ENCODE measurements at regions of chr12 and their contacts with region 1.

Region 1: DNA sequence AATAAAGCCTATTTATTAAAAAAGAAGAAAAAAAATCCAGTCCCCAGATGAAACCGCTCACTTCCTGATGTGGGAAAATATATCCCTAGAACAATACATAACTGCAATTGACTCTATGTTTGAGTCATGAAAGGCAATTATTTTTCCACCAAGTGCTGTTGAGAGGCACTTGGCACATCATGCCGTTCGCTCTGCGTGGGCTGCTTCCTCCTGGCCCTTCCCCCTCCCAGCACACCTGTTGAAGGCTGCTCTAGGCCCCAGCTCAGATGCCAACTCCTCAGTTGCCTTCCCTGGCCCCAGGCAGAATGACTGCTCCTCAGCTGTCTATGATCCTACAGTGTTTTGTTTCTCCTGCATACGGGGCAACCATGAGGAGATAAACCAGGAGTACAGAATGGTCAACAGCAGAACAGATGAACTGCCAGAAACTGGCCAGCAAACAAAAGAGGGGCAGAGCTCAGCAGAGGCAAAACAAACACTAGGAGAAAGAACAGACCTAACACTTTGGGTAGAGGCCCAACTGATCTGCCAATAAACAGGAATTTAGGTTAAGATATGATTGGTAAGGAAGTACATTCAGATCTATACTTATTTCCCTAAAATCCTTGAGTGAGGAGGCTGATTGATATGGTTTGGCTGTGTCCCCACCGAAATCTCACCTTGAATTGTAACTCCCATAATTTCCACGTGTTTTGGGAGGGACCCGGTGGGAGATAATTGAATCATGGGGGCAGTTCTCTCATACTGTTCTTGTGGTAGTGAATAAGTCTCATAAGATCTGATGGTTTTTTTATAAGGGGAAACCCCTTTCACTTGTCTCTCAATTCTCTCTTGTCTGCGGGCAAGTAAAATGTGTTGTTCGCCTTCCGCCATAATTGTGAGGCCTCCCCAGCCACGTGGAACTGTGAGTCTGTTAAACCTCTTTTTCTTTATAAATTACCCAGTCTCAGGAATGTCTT is 58.6 kb downstream of the SLC38A1 start:
- DNase-seq: peak; percentile 25 to 37
- ATAC-seq: peak; percentile 51 to 95 (median 78)
- H3K4me3 ChIP-seq: no peak overlapping the region
- H3K27ac ChIP-seq: peak overlapping the region; percentile 42 to 73 (median 58)
- H3K4me1 ChIP-seq: peaks cover 0 to 76% (median 39%) of the 10 kb centered on the region in 9 donors
- H3K27me3 ChIP-seq: no peaks in the 10 kb centered on the region
- CTCF ChIP-seq: no peak

Region 2: GRCh38 chr12:46174061-46174662 is 36.0 kb before region 1 on chr12:
- intact Hi-C with region 1: no loop called
- DNase-seq: no peak
- ATAC-seq: no peak
- H3K4me3 ChIP-seq: no peak overlapping the region
- H3K27ac ChIP-seq: no peak overlapping the region
- H3K4me1 ChIP-seq: peaks cover 0 to 6% (median 0%) of the 10 kb centered on the region in 9 donors
- H3K27me3 ChIP-seq: no peaks in the 10 kb centered on the region
- CTCF ChIP-seq: no peak

Region 3: GRCh38 chr12:46198913-46199312 is 11.3 kb before region 1 on chr12:
- intact Hi-C with region 1: no loop called
- DNase-seq: no peak
- ATAC-seq: no peak
- H3K4me3 ChIP-seq: no peak overlapping the region
- H3K27ac ChIP-seq: no peak overlapping the region
- H3K4me1 ChIP-seq: peaks cover 0 to 3% (median 0%) of the 10 kb centered on the region in 9 donors
- H3K27me3 ChIP-seq: no peaks in the 10 kb centered on the region
- CTCF ChIP-seq: no peak

Region 4: GRCh38 chr12:46259713-46260112 is 49.5 kb after region 1 on chr12:
- intact Hi-C with region 1: loop called in 2 of 10 experiments (anchors 5 to 10 kb)
- DNase-seq: no peak
- ATAC-seq: no peak
- H3K4me3 ChIP-seq: no peak overlapping the region
- H3K27ac ChIP-seq: peak overlapping the region in 5 of 10 donors; percentile 51 to 72 (median 69)
- H3K4me1 ChIP-seq: peaks cover 0 to 60% (median 18%) of the 10 kb centered on the region in 9 donors
- H3K27me3 ChIP-seq: no peaks in the 10 kb centered on the region
- CTCF ChIP-seq: no peak